Activated CD4-positive, alpha-beta T cell treated with anti-CD3 and anti-CD28 coated beads for 36 hours (primary cell): ENCODE measurements at regions of chrX and their contacts with region 1.

Region 1: GRCh38 chrX:11724122-11725017 is 33.7 kb upstream of the MSL3 start:
- DNase-seq: peak; percentile 18
- ATAC-seq: no peak
- H3K4me3 Mint-ChIP-seq: no peak overlapping the region
- H3K27ac Mint-ChIP-seq: no peak overlapping the region
- H3K4me1 Mint-ChIP-seq: no peaks in the 10 kb centered on the region
- H3K27me3 Mint-ChIP-seq: no peaks in the 10 kb centered on the region

Region 2: GRCh38 chrX:11143931-11144678 is 580.3 kb before region 1 on chrX:
- CTCF ChIA-PET with region 1: no interaction called
- POLR2A ChIA-PET with region 1: no interaction called
- intact Hi-C with region 1: loop called in 1 of 2 experiments (anchors 10 kb)
- DNase-seq: peak; percentile 57
- ATAC-seq: peak; percentile 75
- H3K4me3 Mint-ChIP-seq: no peak overlapping the region
- H3K27ac Mint-ChIP-seq: no peak overlapping the region
- H3K4me1 Mint-ChIP-seq: peaks cover 2% of the 10 kb centered on the region
- H3K27me3 Mint-ChIP-seq: peaks cover 2% of the 10 kb centered on the region